ENCODE measurements at regions of chr19 and their contacts with region 1.

Region 1: GRCh38 chr19:17703824-17704463 is 15.3 kb upstream of the MAP1S start:
- DNase-seq: peak; percentile 53 to 68
- H3K4me3 ChIP-seq: no peak overlapping the region
- H3K27ac ChIP-seq: no peak overlapping the region
- H3K4me1 ChIP-seq: no peaks in the 10 kb centered on the region
- H3K27me3 ChIP-seq: peaks cover 0 to 49% (median 2%) of the 10 kb centered on the region in 3 donors
- CTCF ChIP-seq: peak in 5 of 7 experiments; percentile 59 to 90 (median 79)
- EP300 ChIP-seq: no peak
- POLR2A ChIP-seq: no peak

Region 2: GRCh38 chr19:17766543-17767131 is 62.7 kb after region 1 on chr19:
- intact Hi-C with region 1: loop called (anchors 5 kb)
- DNase-seq: peak; percentile 89 to 93
- H3K4me3 ChIP-seq: peak overlapping the region in 2 of 4 donors; percentile 23
- H3K27ac ChIP-seq: no peak overlapping the region
- H3K4me1 ChIP-seq: peaks cover 0 to 20% (median 9%) of the 10 kb centered on the region in 4 donors
- H3K27me3 ChIP-seq: peaks cover 0 to 4% (median 0%) of the 10 kb centered on the region in 3 donors
- CTCF ChIP-seq: peak in 5 of 7 experiments; percentile 68 to 81 (median 70)
- EP300 ChIP-seq: no peak
- POLR2A ChIP-seq: no peak

Measured in stomach (tissue), 19 donors.